Esophagus muscularis mucosa (tissue), 4 donors: ENCODE measurements at regions of chr2 and their contacts with region 1.

Region 1: DNA sequence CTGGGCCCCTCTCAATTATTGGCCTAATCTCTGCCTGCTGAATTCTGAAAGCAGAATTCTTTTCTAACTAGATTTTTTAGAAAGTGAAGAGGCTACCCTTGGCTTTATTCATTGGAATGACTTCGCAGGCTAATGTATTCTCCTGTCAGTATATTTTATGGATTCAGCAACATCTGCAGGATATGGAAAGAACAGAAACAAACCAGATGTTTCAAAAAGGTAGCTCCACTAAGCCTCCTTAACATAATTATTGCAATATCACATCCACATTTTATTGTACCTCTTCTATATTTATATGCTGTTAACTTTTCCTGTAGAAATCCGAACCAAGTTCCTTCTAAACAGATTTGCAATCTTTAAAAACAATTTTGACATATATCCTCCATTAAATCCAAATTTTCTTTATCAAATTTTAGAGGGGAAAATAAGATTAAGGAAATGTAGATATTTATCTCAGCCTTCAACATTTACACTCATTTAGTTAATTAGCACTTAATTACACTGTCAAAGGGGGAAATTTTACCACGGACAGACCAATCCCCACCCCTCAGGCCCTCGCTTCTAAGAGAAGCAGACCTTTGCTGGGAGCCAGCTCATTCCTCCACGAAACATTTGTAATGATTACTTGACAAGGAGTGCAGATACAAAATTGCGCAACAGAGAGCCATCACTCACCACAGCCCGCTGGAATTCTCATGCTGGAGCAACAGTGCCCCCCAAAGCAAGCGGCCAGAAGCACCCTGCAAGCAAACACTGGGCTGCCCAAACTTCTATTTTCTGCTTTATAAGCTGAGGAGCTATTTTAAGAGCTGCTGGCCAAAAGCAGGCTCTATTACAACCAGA is 253.4 kb downstream of the ETAA1 start:
- DNase-seq: peak; percentile 96
- H3K4me3 ChIP-seq: peak overlapping the region in 1 of 4 donors; percentile 0
- H3K27ac ChIP-seq: peak overlapping the region; percentile 75 to 81 (median 76)
- H3K4me1 ChIP-seq: peaks cover 21 to 45% (median 38%) of the 10 kb centered on the region in 4 donors
- H3K27me3 ChIP-seq: no peaks in the 10 kb centered on the region
- CTCF ChIP-seq: peak; percentile 78 to 82 (median 81)
- EP300 ChIP-seq: no peak
- POLR2A ChIP-seq: no peak

Region 2: DNA sequence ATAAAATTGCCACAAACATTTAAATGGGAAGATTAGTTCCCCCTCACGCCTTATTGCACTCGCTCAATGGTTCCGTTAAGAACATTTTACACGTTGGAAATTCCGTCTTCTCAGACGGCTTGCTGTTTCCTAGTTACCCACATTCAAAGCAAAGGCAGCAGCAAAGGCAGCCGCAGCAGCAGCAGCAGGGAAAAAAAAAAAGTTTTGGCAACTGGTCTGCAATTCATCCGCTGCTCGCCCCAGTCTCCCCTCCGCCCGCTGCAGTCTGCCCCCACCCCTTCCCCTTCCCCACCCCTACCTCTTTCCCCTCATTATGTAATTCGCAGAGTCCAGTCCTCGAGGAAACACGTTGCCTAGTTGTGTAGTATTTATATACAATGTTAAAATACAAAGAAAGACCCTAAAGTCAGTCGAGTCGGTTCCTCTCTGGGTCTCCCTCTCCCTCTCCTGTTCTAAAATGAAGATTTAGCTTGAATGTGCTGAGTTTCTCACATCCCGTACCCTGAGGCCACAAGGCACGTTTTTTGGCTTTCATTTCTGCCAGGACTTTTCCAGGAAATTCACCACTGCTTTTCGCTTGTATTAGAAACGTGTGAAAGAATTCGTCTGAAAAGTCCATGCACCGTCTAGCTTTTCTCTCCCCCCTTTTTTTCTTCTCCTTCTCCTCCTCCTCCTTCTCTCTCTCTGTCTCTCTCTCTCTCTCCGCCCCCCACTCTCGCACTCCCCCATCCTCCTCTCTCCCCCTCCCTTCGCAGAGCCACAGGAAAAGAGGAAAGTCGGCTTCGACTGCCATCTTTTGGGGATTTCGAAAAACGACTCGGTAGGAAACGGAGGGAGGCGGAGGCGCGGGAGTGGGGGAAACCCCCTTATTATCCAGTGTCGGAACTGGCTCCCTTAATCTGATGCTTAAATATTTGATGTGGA is 1075.5 kb before region 1 on chr2:
- intact Hi-C with region 1: loop called (anchors 5 kb)
- DNase-seq: peak; percentile 95
- H3K4me3 ChIP-seq: peak overlapping the region; percentile 65 to 73 (median 68)
- H3K27ac ChIP-seq: peak overlapping the region; percentile 95 to 98 (median 97)
- H3K4me1 ChIP-seq: peaks cover 22 to 98% (median 69%) of the 10 kb centered on the region in 4 donors
- H3K27me3 ChIP-seq: peaks cover 0 to 33% (median 4%) of the 10 kb centered on the region in 4 donors
- CTCF ChIP-seq: peak; percentile 46 to 69 (median 51)
- EP300 ChIP-seq: no peak
- POLR2A ChIP-seq: no peak

Region 3: GRCh38 chr2:67259581-67260342 is 390.8 kb before region 1 on chr2:
- intact Hi-C with region 1: loop called (anchors 10 kb)
- DNase-seq: no peak
- H3K4me3 ChIP-seq: peak overlapping the region in 3 of 4 donors; percentile 0 to 25 (median 21)
- H3K27ac ChIP-seq: peak overlapping the region; percentile 80 to 90 (median 87)
- H3K4me1 ChIP-seq: peaks cover 0 to 29% (median 27%) of the 10 kb centered on the region in 4 donors
- H3K27me3 ChIP-seq: no peaks in the 10 kb centered on the region
- CTCF ChIP-seq: no peak
- EP300 ChIP-seq: peak; percentile 1
- POLR2A ChIP-seq: no peak

Region 4: DNA sequence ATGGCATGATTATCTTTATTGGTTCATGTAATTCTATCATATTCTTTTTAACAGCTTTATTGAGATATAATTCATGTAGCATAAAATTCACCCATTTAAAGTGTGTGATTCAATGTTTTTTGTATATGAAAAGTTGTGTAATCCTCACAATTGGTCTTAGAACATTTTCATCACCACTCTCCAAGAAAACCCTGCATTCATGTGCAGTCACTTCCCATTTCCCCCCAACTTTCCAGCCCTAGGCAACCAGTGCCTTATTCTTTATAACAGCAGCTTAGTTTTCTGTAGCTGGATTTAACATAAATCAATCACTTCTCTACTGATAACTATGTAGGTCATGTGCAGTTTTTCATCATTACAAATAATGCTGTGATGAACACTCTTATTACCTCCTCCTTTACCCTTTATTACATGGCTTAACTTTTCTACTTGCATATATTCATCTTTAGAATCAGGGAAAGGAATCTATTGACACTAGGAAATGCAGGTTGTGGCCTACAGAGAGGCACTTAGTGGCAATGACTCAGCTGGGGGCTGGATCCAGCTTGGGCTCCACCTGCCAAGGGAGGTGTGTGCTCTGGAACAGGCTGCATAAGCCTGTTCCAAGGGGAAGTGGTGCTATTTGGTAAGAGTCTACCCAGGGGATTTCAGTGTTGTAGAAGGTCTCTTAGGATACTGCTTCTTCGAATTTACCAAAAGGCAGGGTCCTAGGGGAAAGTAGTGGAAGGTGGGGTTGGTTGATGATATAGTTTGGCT is 164.3 kb before region 1 on chr2:
- intact Hi-C with region 1: loop called (anchors 10 kb)
- DNase-seq: no peak
- H3K4me3 ChIP-seq: no peak overlapping the region
- H3K27ac ChIP-seq: no peak overlapping the region
- H3K4me1 ChIP-seq: peaks cover 0 to 6% (median 2%) of the 10 kb centered on the region in 4 donors
- H3K27me3 ChIP-seq: no peaks in the 10 kb centered on the region
- CTCF ChIP-seq: no peak
- EP300 ChIP-seq: no peak
- POLR2A ChIP-seq: no peak

Region 5: DNA sequence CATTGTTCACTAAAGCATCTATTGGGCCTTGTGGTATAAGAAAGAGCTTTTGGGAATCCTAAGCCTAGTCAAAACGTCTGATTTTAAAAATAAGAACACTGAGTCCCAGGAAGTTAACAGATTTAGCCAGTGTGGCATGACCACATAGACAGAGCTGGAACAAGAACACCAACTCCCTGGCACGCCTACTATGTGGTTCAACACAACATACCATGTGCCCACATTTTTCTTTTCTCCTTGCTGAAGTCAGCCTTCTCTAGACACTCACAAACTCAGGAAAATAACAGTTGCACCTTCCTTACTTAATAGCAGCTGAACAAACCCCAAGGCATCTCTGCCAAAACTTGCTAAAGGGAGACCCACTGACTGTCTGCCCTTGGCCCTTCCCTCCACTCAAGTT is 287.5 kb after region 1 on chr2:
- intact Hi-C with region 1: no loop called
- DNase-seq: no peak
- H3K4me3 ChIP-seq: no peak overlapping the region
- H3K27ac ChIP-seq: no peak overlapping the region
- H3K4me1 ChIP-seq: no peaks in the 10 kb centered on the region
- H3K27me3 ChIP-seq: no peaks in the 10 kb centered on the region
- CTCF ChIP-seq: no peak
- EP300 ChIP-seq: no peak
- POLR2A ChIP-seq: no peak